ENCODE measurements at regions of chr6 and their contacts with region 1.

Region 1: GRCh38 chr6:31197559-31198305 is 27.2 kb upstream of the POU5F1 start:
- DNase-seq: peak; percentile 92
- H3K4me3 Mint-ChIP-seq: peak overlapping the region; percentile 98
- H3K27ac Mint-ChIP-seq: peak overlapping the region; percentile 99
- H3K4me1 Mint-ChIP-seq: peaks cover 53% of the 10 kb centered on the region
- H3K27me3 Mint-ChIP-seq: no peaks in the 10 kb centered on the region

Region 2: DNA sequence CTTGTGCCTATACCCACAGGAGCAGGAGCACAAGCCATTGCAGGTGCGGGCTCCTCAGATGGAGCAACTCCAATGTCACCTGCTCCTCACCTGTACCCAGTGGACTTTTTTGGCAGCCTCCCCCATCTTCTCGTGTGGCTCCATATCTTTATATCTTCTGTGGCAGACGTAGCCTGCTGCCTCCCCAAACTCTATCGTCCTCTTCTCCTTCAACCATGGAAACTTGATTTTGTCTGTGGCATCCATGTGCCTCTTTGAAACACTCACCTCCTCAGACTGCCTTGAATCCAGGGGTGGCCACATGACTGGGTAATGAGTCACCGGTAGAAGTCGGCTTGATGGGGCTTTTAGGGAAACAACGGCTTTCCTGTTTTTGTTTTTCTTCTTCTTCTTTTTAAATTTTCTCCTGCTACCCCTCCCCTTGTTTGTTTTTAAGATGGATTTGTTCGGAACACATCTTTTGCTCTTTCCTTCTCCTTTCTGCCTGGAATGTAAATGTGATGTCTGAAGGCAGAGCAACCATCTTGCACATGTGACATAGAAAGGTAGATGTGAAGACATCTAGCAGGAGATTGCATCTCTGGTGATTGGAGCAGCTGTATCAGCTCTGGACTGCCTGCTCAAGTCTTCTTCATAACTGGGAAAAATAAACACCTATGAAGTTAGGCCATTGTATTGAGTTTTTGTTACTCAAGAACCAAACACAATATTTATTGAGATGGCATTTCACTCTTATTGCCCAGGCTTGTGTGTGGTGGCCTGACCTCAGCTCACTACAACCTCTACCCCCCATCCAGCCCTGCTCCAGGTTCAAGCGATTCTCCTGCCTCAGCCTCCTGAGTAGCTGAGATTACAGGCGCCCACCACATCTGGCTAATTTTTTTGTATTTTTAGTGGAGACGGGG is 383.3 kb before region 1 on chr6:
- intact Hi-C with region 1: loop called (anchors 5 kb)
- DNase-seq: peak; percentile 47
- H3K4me3 Mint-ChIP-seq: peak overlapping the region; percentile 72
- H3K27ac Mint-ChIP-seq: peak overlapping the region; percentile 99
- H3K4me1 Mint-ChIP-seq: peaks cover 86% of the 10 kb centered on the region
- H3K27me3 Mint-ChIP-seq: peaks cover 1% of the 10 kb centered on the region

Region 3: GRCh38 chr6:31271641-31272357 is 74.1 kb after region 1 on chr6 and contains the start of gene HLA-C:
- intact Hi-C with region 1: loop called (anchors 1 kb)
- DNase-seq: peak; percentile 88
- H3K4me3 Mint-ChIP-seq: peak within 1 kb of the TSS; percentile 97
- H3K27ac Mint-ChIP-seq: peak within 1 kb of the TSS; percentile 94
- H3K4me1 Mint-ChIP-seq: peaks cover 53% of the 10 kb centered on the region
- H3K27me3 Mint-ChIP-seq: peaks cover 4% of the 10 kb centered on the region
- total RNA-seq, gene HLA-C: 944 and 984 TPM in 2 replicates

Region 4: DNA sequence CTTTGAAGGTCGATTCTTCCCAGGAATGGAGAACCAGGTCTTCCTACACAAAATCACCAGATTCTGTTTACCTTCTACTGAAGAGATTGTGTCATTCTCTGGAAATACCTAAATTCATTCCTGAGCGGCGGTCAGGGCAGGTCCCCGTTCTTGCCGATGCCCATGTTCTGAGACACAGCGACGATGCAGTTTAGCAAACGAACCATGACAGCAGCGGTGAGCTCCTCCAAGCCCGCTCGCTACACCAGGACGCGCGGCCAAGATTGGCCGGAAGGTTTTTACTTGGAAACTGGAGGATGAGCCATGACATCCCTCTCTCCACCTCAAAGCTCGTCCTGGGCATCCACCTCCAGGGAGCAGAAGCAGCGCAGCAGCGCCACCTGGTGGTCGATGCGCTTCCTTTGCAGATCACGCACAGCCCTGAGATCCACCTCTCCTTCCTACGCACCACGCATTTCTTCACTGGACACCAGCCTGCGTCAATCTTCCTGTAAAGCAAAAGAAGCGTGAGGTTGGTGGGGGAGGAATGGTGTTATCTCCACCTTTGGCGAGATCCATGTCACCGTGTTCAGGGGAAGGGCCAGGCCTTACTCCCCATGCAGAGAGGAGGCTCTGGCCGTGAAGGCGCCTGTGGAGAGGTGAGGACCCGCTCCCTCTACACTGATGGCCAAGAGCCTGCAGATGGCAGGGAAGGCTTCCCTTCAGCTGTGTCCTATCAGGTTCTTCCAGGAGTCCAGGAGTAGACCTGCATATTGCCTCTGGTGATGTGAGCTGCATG is 169.2 kb after region 1 on chr6:
- intact Hi-C with region 1: loop called (anchors 1 kb)
- DNase-seq: peak; percentile 81
- H3K4me3 Mint-ChIP-seq: peak overlapping the region; percentile 56
- H3K27ac Mint-ChIP-seq: no peak overlapping the region
- H3K4me1 Mint-ChIP-seq: peaks cover 39% of the 10 kb centered on the region
- H3K27me3 Mint-ChIP-seq: peaks cover 64% of the 10 kb centered on the region

Region 5: DNA sequence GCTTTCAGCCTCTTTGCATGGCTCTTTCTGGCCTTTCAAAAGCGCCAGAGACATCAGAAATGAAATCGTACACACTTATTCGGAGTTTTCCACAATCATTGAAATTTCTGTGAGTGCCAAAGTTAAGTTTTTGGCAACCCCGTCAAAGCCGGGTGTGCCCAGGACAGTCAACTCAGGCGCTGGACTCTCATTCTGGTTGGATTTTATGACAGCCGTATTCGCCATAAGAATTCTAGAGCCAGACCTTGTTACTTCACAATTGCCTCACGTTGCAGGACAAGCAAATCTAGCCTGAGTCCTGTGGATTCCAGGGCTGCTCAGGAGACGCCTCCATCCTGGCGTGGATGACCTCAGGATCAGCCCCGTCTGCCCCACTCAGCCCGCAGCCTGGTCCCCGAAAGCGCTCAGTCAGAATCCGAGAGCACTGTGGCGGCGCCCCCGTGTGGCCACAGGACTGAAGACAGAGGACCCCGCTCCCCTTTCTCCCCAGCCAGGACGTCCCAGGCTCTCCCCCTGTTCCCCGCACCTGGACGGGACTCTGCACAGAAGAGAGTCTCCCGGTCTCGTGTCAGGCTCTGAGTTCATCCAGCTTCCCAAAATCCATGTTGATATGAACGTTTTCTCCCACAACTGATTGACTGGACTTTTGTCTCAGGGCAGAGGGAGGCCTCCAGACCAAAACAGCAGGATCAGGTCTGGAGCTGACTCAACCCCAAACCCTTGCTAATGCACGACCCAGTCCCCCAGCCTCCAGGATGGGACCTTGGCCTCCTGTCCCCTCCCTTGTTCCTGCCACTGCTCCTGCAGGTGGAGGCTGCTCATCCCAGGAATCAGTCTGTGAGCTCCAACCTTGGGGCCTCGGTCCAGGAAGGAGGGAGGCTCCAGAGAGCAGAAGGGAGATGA is 243.9 kb after region 1 on chr6:
- intact Hi-C with region 1: loop called (anchors 2 kb)
- DNase-seq: peak; percentile 71
- H3K4me3 Mint-ChIP-seq: no peak overlapping the region
- H3K27ac Mint-ChIP-seq: no peak overlapping the region
- H3K4me1 Mint-ChIP-seq: peaks cover 7% of the 10 kb centered on the region
- H3K27me3 Mint-ChIP-seq: peaks cover 35% of the 10 kb centered on the region

Region 6: DNA sequence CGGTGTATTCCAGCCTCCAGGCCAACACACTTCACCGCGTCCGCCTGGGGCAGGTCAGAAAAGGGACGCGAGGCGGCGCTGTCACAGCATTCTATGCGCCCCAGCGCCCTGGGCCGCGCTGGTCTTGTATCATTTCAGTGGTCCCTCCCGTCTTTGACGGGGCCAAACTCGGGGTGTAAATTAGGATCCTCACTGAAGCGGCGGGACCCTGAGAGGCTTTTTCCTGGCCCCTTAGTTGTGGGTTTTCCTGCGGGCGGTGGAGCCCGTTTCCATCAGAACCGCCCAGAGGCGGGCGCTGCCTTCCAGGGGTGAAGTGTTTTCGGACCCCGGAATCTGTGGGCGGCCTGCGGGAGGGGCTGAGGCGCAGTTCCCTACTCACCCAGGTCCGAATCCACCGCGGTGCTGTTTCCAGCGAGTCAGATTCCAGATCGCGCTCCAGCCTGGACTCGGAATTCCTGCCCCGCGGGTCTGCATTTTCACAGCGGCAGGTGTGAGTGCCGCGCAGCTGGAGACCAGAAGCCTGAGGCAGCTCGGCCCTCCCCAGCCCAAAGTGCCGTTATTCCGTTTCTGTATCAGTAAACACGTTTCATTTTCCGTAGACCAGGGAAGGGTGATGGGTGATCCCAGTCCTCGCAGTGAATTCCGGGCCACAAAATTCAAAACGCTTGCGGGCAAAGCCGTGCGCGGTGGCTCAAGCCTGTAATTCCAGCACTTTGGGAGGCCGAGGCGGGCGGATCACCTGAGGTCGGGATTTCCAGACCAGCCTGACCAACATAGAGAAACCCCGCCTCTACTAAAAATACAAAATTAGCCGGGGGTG is 296.4 kb after region 1 on chr6:
- intact Hi-C with region 1: loop called (anchors 2 kb)
- DNase-seq: peak; percentile 69
- H3K4me3 Mint-ChIP-seq: peak overlapping the region; percentile 89
- H3K27ac Mint-ChIP-seq: peak overlapping the region; percentile 85
- H3K4me1 Mint-ChIP-seq: peaks cover 46% of the 10 kb centered on the region
- H3K27me3 Mint-ChIP-seq: no peaks in the 10 kb centered on the region